Activated naive CD4-positive, alpha-beta T cell treated with anti-CD3 and anti-CD28 coated beads, Interleukin-2, amount 10 ng/mL, durations not matched to agents 7 days and 5 days (primary cell): ENCODE measurements at regions of chr5 and their contacts with region 1.

Region 1: GRCh38 chr5:73591102-73591695 is 25.7 kb downstream of the UTP15 start:
- DNase-seq: peak; percentile 52
- H3K4me3 Mint-ChIP-seq: no peak overlapping the region
- H3K27ac Mint-ChIP-seq: no peak overlapping the region
- H3K4me1 Mint-ChIP-seq: no peaks in the 10 kb centered on the region
- H3K27me3 Mint-ChIP-seq: no peaks in the 10 kb centered on the region

Region 2: GRCh38 chr5:73388306-73388684 is 202.9 kb before region 1 on chr5:
- CTCF ChIA-PET with region 1: no interaction called
- DNase-seq: no peak
- H3K4me3 Mint-ChIP-seq: no peak overlapping the region
- H3K27ac Mint-ChIP-seq: peak overlapping the region; percentile 86
- H3K4me1 Mint-ChIP-seq: peaks cover 29% of the 10 kb centered on the region
- H3K27me3 Mint-ChIP-seq: peaks cover 53% of the 10 kb centered on the region

Region 3: DNA sequence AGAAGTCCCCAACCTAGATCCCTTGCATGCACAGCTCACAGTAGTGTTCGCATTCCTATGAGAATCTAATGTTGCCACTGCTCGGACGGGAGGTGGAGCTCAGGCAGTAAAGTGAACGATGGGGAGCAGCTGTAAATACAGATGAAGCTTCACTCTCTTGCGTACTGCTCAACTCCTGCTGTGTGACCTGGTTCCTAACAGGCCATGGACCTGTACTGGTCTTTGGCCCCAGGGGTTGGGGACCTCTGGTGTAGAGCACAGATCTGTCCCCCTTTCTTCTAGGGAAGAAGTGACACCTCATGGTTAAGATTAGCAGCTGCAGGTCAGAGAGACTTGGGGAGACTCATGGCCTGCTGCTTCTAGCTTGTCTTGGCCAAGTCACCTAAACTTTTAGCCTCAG is 41.9 kb after region 1 on chr5:
- CTCF ChIA-PET with region 1: no interaction called
- DNase-seq: no peak
- H3K4me3 Mint-ChIP-seq: no peak overlapping the region
- H3K27ac Mint-ChIP-seq: no peak overlapping the region
- H3K4me1 Mint-ChIP-seq: no peaks in the 10 kb centered on the region
- H3K27me3 Mint-ChIP-seq: peaks cover 17% of the 10 kb centered on the region

Region 4: DNA sequence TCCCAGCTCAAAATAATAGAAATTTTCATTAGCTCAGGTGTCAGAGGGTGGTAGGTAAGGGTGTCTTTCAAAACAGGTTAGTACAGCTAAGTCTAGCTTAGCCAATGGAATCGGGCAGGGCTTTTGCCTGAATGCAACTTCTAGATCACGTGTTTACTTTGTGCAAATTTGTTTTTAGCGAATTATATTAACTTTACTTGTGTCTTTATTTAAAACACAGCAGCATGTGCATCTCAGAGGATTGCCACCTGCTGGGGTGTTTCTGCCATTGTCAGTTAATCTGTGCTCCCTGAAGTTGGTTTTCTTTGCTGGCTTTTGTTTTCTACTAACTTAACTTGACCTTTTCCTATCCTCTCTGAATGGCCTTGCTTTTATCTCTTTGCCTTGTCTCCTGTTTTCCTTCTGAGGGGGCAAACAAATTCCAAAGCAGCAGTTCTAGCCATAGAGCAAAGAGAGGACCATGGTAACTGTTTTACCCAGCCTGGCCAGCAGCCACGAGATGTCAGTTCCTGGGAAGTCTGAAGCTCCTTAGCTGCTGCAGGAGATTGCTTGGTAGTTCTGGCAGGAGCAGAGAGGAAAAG is 102.4 kb after region 1 on chr5:
- CTCF ChIA-PET with region 1: interaction called, 24 read pairs
- DNase-seq: no peak
- H3K4me3 Mint-ChIP-seq: no peak overlapping the region
- H3K27ac Mint-ChIP-seq: no peak overlapping the region
- H3K4me1 Mint-ChIP-seq: no peaks in the 10 kb centered on the region
- H3K27me3 Mint-ChIP-seq: peaks cover 10% of the 10 kb centered on the region

Region 5: DNA sequence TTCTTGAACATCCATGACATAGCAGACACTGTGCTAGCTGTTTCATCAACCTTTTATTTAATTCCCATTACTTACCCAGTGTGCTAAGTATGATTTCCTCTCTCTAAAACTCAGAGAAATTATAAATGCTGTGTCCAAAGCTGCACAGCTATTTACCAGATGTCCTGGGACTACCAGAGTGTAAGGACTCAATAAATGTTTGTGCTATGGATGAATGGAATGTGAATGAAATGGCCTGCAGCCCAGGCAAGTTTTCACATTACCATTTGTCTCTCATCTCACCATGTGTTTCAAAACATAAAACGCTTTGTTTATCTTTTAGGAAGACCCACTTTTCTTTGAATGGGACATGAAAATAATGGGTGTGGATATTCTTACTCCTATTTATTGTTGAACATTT is 131.0 kb after region 1 on chr5:
- CTCF ChIA-PET with region 1: no interaction called
- DNase-seq: no peak
- H3K4me3 Mint-ChIP-seq: no peak overlapping the region
- H3K27ac Mint-ChIP-seq: no peak overlapping the region
- H3K4me1 Mint-ChIP-seq: no peaks in the 10 kb centered on the region
- H3K27me3 Mint-ChIP-seq: peaks cover 16% of the 10 kb centered on the region

Region 6: GRCh38 chr5:73792687-73793320 is 201.6 kb after region 1 on chr5:
- CTCF ChIA-PET with region 1: interaction called, 109 read pairs
- DNase-seq: peak; percentile 77
- H3K4me3 Mint-ChIP-seq: no peak overlapping the region
- H3K27ac Mint-ChIP-seq: no peak overlapping the region
- H3K4me1 Mint-ChIP-seq: no peaks in the 10 kb centered on the region
- H3K27me3 Mint-ChIP-seq: peaks cover 8% of the 10 kb centered on the region